Caco-2 (cell line): ENCODE measurements at regions of chr2 and their contacts with region 1.

Region 1: GRCh38 chr2:154375579-154375931 is 322.9 kb upstream of the KCNJ3 start:
- DNase-seq: peak in 1 of 2 experiments; percentile 21
- H3K4me3 ChIP-seq: no peak overlapping the region
- H3K4me3 Mint-ChIP-seq: peak overlapping the region; percentile 31
- H3K27ac Mint-ChIP-seq: no peak overlapping the region
- H3K4me1 ChIP-seq: no peaks in the 10 kb centered on the region
- H3K4me1 Mint-ChIP-seq: no peaks in the 10 kb centered on the region
- H3K27me3 ChIP-seq: no peaks in the 10 kb centered on the region
- H3K27me3 Mint-ChIP-seq: peaks cover 10% of the 10 kb centered on the region
- CTCF ChIP-seq: peak; percentile 18 to 50

Region 2: DNA sequence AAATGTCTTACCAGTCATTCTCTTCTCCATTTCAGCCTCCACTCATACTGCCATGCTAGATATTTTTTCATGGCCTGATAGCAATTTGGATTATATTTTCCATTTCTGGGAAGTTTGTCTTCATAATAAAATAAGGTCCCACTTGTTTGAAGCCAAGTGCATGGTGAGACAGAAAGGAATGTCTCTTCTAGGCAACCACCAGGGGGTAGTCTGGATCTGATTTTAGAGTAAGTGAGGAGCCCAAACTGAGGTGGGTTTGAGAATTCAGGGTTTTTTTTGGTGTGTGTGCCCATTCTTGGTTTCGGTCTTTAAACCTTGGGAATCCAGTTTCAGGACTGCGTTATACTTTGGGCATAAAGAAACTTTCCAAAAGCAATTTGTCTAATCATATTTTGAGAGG is 1212.5 kb before region 1 on chr2:
- CTCF ChIA-PET with region 1: no interaction called
- POLR2A ChIA-PET with region 1: no interaction called
- intact Hi-C with region 1: loop called (anchors 1 kb)
- DNase-seq: peak in 1 of 2 experiments; percentile 55
- H3K4me3 ChIP-seq: no peak overlapping the region
- H3K4me3 Mint-ChIP-seq: no peak overlapping the region
- H3K27ac Mint-ChIP-seq: no peak overlapping the region
- H3K4me1 ChIP-seq: no peaks in the 10 kb centered on the region
- H3K4me1 Mint-ChIP-seq: no peaks in the 10 kb centered on the region
- H3K27me3 ChIP-seq: no peaks in the 10 kb centered on the region
- H3K27me3 Mint-ChIP-seq: peaks cover 4% of the 10 kb centered on the region
- CTCF ChIP-seq: peak; percentile 66 to 67

Region 3: DNA sequence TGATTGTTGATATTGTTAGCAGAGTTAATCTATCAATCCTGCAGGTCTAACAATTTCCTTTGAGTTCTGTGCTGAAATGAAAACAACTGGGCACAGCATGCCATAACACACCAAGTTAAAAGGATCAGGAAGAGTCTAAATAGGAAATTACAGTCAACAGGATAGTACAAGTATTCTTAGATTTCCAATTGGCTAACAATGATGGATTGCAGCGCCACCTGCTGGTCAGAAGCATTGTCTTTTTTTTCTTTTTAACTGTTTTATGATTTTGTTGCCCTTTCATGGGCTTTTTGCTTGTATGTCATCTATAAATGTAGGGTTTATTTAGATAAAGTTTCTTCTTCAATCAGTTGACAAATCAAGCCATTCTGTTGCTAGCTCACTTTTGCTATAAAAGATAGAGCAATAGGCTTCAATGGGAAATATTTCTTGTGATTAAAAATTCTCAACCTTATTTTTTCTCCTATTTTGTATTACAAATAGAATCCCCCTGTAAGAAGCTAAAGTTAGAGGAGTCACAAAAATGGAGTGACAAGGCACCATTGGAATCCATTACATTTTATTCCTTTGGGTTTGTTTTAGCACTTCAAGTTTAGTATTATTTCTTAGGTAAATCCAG is 856.2 kb before region 1 on chr2:
- CTCF ChIA-PET with region 1: no interaction called
- POLR2A ChIA-PET with region 1: no interaction called
- intact Hi-C with region 1: loop called (anchors 5 kb)
- DNase-seq: peak in 1 of 2 experiments; percentile 55
- H3K4me3 ChIP-seq: no peak overlapping the region
- H3K4me3 Mint-ChIP-seq: no peak overlapping the region
- H3K27ac Mint-ChIP-seq: no peak overlapping the region
- H3K4me1 ChIP-seq: no peaks in the 10 kb centered on the region
- H3K4me1 Mint-ChIP-seq: no peaks in the 10 kb centered on the region
- H3K27me3 ChIP-seq: no peaks in the 10 kb centered on the region
- H3K27me3 Mint-ChIP-seq: peaks cover 5% of the 10 kb centered on the region
- CTCF ChIP-seq: peak; percentile 66 to 79

Region 4: GRCh38 chr2:153718457-153718856 is 657.1 kb before region 1 on chr2:
- CTCF ChIA-PET with region 1: interaction called, 3 read pairs
- POLR2A ChIA-PET with region 1: no interaction called
- intact Hi-C with region 1: loop called (anchors 2 kb)
- DNase-seq: peak in 1 of 2 experiments; percentile 1
- H3K4me3 ChIP-seq: no peak overlapping the region
- H3K4me3 Mint-ChIP-seq: no peak overlapping the region
- H3K27ac Mint-ChIP-seq: no peak overlapping the region
- H3K4me1 ChIP-seq: no peaks in the 10 kb centered on the region
- H3K4me1 Mint-ChIP-seq: no peaks in the 10 kb centered on the region
- H3K27me3 ChIP-seq: no peaks in the 10 kb centered on the region
- H3K27me3 Mint-ChIP-seq: no peaks in the 10 kb centered on the region
- CTCF ChIP-seq: peak in 1 of 2 experiments; percentile 21

Region 5: GRCh38 chr2:153787612-153788011 is 587.9 kb before region 1 on chr2:
- CTCF ChIA-PET with region 1: no interaction called
- POLR2A ChIA-PET with region 1: no interaction called
- intact Hi-C with region 1: loop called (anchors 2 kb)
- DNase-seq: no peak
- H3K4me3 ChIP-seq: no peak overlapping the region
- H3K4me3 Mint-ChIP-seq: no peak overlapping the region
- H3K27ac Mint-ChIP-seq: no peak overlapping the region
- H3K4me1 ChIP-seq: no peaks in the 10 kb centered on the region
- H3K4me1 Mint-ChIP-seq: no peaks in the 10 kb centered on the region
- H3K27me3 ChIP-seq: no peaks in the 10 kb centered on the region
- H3K27me3 Mint-ChIP-seq: no peaks in the 10 kb centered on the region
- CTCF ChIP-seq: no peak

Region 6: GRCh38 chr2:153967248-153967973 is 408.1 kb before region 1 on chr2:
- CTCF ChIA-PET with region 1: no interaction called
- POLR2A ChIA-PET with region 1: no interaction called
- intact Hi-C with region 1: loop called (anchors 1 kb)
- DNase-seq: no peak
- H3K4me3 ChIP-seq: no peak overlapping the region
- H3K4me3 Mint-ChIP-seq: no peak overlapping the region
- H3K27ac Mint-ChIP-seq: no peak overlapping the region
- H3K4me1 ChIP-seq: no peaks in the 10 kb centered on the region
- H3K4me1 Mint-ChIP-seq: no peaks in the 10 kb centered on the region
- H3K27me3 ChIP-seq: no peaks in the 10 kb centered on the region
- H3K27me3 Mint-ChIP-seq: no peaks in the 10 kb centered on the region
- CTCF ChIP-seq: no peak

Region 7: DNA sequence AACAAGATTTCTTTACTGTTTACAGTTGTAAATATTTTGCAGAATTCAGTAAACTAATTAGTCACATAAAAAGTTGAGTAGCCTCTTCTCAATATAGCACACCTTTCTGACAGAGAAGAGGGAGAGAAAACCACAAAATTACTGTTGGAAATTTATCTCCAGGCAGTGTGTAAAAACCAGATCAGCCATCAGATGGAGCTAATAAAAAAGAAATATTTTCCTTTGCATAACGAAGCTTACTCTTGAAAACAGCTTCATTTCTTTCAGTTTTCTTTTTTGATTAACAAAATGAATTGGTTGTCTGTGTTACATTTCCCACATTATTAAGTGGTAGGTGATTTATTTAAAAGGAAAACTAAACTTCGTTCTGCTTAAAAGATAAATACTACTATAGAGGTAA is 63.6 kb after region 1 on chr2:
- CTCF ChIA-PET with region 1: no interaction called
- POLR2A ChIA-PET with region 1: no interaction called
- intact Hi-C with region 1: no loop called
- DNase-seq: no peak
- H3K4me3 ChIP-seq: no peak overlapping the region
- H3K4me3 Mint-ChIP-seq: no peak overlapping the region
- H3K27ac Mint-ChIP-seq: no peak overlapping the region
- H3K4me1 ChIP-seq: no peaks in the 10 kb centered on the region; the same call in 1 of the 2 replicates
- H3K4me1 Mint-ChIP-seq: no peaks in the 10 kb centered on the region
- H3K27me3 ChIP-seq: no peaks in the 10 kb centered on the region
- H3K27me3 Mint-ChIP-seq: no peaks in the 10 kb centered on the region
- CTCF ChIP-seq: peak in 1 of 2 experiments; percentile 30